ENCODE measurements at regions of chr20 and their contacts with region 1.

Region 1: DNA sequence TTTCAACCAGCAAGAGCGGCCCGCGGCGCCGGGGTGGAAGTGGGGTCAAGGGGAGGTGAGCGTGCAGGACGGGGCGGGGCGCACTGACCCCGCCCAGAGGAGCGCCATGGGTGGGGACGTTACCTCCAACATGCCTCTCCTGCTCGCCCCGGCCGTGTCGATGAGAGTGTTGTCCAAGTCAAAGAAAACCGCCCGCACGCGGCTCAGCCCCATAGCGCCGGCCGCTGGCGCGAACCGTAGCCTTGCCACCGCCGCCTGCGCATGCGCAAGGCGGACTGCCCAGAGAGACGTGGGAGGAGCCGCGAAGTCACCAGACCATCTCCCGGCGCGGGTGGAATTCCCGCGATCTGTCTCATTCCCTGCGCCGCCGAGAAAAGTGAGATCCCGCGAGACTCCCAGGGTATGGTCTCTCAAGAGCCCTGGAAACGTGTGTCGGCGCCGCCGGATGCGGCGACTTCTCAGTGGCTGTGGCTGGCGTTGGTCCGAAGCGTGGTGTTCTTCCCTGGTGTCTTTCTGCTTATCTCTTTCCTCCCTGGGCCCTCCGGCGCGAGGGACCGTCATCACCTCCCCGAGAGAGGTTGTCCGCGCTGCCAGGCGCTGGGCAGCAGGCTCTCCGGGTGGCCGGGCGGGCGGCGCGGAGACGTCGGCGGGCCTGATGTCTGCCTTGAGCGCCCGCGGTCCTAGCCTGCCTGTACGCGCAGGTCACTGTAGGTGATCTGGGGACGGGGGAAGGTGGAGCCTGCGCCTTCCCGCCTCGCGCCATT is at the start of gene NANP:
- DNase-seq: peak; percentile 98
- H3K4me3 Mint-ChIP-seq: peak within 1 kb of the TSS; percentile 78
- H3K27ac Mint-ChIP-seq: peak within 1 kb of the TSS; percentile 73
- H3K4me1 Mint-ChIP-seq: peaks cover 20% of the 10 kb centered on the region
- H3K27me3 Mint-ChIP-seq: no peaks in the 10 kb centered on the region
- CTCF ChIP-seq: no peak
- total RNA-seq, gene NANP: 5.2 and 5.7 TPM in 2 replicates

Region 2: DNA sequence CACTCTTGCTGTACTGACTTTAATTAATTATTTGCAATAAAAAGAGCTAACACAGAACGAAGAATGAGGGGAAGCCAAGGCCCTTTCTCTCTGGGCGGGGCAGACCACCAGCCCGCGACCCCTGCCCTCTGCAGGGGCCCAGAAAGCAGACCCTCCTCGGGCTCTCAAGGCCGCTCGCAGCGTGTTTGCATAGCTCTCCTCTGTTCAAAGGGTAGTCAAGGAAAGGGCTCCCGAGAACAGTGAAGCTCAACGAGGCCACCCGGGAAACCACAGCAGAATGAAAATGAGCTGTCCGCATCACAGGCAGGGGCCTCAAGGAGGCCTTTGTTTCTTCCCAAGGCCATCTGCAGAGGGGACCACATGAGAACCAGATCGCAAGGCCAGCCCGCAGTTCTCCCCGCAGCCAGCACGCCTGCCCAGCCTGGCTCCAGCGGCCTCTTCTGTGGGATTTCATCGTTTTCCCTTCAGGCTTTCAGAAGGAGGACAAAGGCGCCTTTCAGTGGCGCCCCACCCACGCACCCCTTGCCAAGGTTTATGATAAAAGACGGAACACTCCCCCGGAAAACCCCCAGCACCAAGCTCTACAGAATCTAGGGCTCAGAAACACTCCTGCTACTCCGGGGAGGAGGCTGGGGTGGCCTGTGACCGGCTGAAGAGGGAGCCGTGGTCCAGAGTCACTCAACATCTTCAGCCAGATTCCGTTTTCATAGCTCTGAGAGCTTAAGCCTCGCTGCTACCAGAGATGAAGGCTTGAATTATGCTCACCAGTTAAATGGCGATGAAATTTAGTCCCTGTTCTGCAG is 591.2 kb before region 1 on chr20:
- CTCF ChIA-PET with region 1: no interaction called
- POLR2A ChIA-PET with region 1: no interaction called
- intact Hi-C with region 1: no loop called
- DNase-seq: no peak
- H3K4me3 Mint-ChIP-seq: no peak overlapping the region
- H3K27ac Mint-ChIP-seq: no peak overlapping the region
- H3K4me1 Mint-ChIP-seq: peaks cover 16% of the 10 kb centered on the region
- H3K27me3 Mint-ChIP-seq: no peaks in the 10 kb centered on the region
- CTCF ChIP-seq: no peak

Region 3: GRCh38 chr20:25584905-25585704 is 38.8 kb before region 1 on chr20 and contains the start of gene NINL:
- CTCF ChIA-PET with region 1: no interaction called
- POLR2A ChIA-PET with region 1: no interaction called
- intact Hi-C with region 1: no loop called
- DNase-seq: peak; percentile 38
- H3K4me3 Mint-ChIP-seq: peak within 1 kb of the TSS; percentile 52
- H3K27ac Mint-ChIP-seq: no peak within 1 kb of the TSS
- H3K4me1 Mint-ChIP-seq: no peaks in the 10 kb centered on the region
- H3K27me3 Mint-ChIP-seq: no peaks in the 10 kb centered on the region
- CTCF ChIP-seq: no peak
- total RNA-seq, gene NINL: 1.2 and 1.3 TPM in 2 replicates

Region 4: DNA sequence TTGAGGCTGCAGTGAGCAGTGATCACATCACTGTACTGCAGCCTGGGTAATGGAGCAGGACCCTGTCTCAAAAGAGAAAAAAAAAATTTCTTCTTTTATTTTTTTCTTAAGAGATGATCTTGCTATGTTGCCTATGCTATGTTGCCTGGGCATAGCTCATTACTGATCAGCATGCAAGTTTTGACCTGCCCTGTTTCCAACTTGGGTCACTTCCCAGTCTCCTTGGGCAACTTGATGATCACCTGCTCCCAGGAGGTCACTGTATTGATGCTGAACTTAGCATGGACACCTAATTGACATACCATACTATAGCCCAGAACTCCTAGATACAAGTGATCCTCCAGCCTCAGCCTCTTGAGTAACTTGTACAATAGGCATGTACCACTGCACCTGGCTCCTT is 30.6 kb after region 1 on chr20:
- CTCF ChIA-PET with region 1: interaction called, 3 read pairs
- POLR2A ChIA-PET with region 1: interaction called, 10 read pairs
- intact Hi-C with region 1: no loop called
- DNase-seq: peak; percentile 72
- H3K4me3 Mint-ChIP-seq: no peak overlapping the region
- H3K27ac Mint-ChIP-seq: peak overlapping the region; percentile 20
- H3K4me1 Mint-ChIP-seq: no peaks in the 10 kb centered on the region
- H3K27me3 Mint-ChIP-seq: no peaks in the 10 kb centered on the region
- CTCF ChIP-seq: no peak